Right cardiac atrium (tissue), 5 donors: ENCODE measurements at regions of chr12 and their contacts with region 1.

Region 1: DNA sequence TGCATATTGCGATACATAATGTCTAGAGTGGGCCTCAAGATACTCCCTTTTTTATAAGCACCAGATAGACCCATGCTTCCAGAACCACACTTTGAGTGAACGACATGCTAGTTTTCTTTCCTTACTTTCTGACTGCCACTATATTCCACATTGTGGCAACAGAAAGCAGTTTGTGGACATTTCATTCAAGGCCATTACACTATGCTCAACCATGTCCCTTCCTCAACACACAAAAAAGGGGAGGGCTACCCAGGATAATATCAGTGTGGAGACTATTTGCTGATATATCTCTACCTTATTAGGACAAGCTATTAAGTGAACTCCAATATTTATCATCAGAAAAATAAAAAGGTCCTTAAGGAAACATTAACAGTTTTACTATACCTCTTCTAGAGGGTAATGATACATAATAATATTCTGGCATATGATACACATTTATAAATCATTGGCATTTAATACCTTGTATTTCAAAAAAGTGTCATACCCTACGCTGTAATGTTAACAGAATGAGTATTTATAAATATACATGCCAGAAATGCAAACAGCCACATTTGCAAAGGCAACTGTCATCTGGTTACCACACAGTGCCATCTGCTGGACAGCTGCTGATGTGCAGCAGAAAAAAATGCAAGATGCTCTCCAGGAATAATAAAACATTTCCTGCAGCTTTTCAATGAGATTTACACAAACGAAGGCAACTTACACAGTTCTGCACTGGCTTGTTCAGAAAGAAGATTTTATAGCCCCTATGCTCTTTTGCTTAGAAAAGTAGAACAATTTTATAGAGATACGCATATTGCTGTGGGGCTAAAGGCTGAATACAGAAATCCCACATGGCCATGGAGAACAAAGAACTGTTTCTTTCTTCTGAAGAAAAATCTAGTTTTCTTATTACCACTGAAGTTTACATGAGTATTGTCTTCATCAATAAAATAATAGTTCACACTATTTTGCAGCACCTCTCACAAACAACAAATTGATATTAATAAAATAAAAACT is 182.2 kb upstream of the GRIP1 start:
- DNase-seq: peak; percentile 41 to 75 (median 73)
- ATAC-seq: peak; percentile 22 to 58
- H3K4me3 ChIP-seq: no peak overlapping the region
- H3K27ac ChIP-seq: no peak overlapping the region
- H3K4me1 ChIP-seq: no peaks in the 10 kb centered on the region
- H3K27me3 ChIP-seq: no peaks in the 10 kb centered on the region

Region 2: DNA sequence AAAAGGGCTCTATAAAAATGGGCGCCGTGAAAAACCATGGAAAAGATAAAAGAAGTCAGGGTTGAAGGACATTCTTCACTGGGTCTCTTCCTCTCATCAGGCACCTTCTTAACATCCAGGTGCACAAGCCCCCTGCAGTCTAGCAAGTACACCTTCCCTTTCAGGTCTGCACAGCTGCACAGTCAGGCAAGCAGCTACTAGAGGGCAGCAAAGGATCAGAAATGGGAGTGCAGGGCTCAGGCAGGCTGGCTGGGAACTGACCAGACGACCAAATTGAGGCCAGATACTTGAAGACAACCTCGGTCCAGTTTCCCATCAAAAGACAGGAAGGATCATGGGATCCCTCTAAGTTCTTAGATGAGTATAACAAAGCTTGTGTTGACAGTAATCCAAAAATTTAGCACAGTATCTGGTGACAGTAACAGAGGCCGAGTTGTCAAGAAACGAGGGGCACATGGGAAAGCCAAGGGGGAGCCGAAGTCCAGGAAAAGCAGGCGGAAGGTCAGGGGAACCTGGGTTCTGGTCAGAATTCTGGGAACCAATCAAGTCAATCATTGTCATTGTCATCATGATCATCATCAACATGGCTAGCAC is 172.1 kb before region 1 on chr12:
- intact Hi-C with region 1: loop called in 3 of 4 experiments (anchors 2 to 5 kb)
- DNase-seq: peak in 2 of 3 donors; percentile 53 to 54
- ATAC-seq: peak; percentile 78 to 86
- H3K4me3 ChIP-seq: no peak overlapping the region
- H3K27ac ChIP-seq: no peak overlapping the region
- H3K4me1 ChIP-seq: peaks cover 3% of the 10 kb centered on the region
- H3K27me3 ChIP-seq: no peaks in the 10 kb centered on the region

Region 3: GRCh38 chr12:66693901-66694675 is 167.0 kb before region 1 on chr12:
- intact Hi-C with region 1: loop called in 3 of 4 experiments (anchors 2 to 5 kb)
- DNase-seq: peak in 2 of 3 donors; percentile 15 to 38
- ATAC-seq: peak; percentile 52 to 75
- H3K4me3 ChIP-seq: no peak overlapping the region
- H3K27ac ChIP-seq: no peak overlapping the region
- H3K4me1 ChIP-seq: peaks cover 3% of the 10 kb centered on the region
- H3K27me3 ChIP-seq: no peaks in the 10 kb centered on the region

Region 4: GRCh38 chr12:67091204-67091603 is 230.2 kb after region 1 on chr12:
- intact Hi-C with region 1: no loop called
- DNase-seq: no peak
- ATAC-seq: peak; percentile 42 to 73
- H3K4me3 ChIP-seq: no peak overlapping the region
- H3K27ac ChIP-seq: no peak overlapping the region
- H3K4me1 ChIP-seq: no peaks in the 10 kb centered on the region
- H3K27me3 ChIP-seq: no peaks in the 10 kb centered on the region